ENCODE measurements at regions of chr4 and their contacts with region 1.

Region 1: DNA sequence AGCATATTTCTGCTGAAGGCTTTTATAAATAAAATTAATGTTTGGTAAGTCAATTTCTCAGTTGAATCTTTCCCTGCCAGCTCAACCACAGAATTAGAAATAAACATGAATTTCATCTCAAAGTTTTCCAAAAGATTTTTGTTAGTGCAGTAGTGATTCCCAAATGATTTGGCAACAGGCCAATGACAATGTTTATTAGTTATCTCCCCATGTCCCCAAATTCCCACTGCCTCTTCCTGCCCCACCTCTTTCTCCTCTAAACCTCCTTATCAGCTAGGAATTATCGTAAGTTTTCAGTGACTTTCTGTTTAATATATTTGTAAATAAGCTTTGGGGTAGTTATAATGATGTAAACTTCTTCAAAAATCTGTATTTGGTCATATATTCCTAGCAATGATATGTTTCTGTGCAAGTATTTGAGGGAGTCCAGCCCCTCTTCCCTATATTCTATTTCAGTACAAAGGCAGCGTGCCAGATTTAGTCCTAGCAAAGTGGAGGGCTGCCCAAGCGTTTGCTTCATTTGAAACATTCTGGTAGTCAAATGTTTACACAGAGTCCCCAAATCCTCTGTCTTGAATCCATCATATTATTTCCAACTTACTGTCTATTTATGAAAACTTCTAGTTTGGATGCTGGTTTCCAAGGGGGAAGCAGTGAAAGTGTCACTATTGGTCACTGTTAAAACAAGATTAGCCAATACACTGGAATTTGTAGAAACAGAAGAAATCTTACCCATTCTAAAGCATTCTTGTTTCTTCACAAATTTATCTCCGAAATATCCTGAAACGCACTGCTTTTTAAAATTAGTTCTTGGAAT is 33.7 kb upstream of the ANKRD50 start:
- DNase-seq: peak in 1 of 4 donors; percentile 9
- ATAC-seq: no peak
- H3K4me3 ChIP-seq: no peak overlapping the region
- H3K27ac ChIP-seq: no peak overlapping the region
- H3K4me1 ChIP-seq: no peaks in the 10 kb centered on the region
- H3K27me3 ChIP-seq: no peaks in the 10 kb centered on the region
- CTCF ChIP-seq: no peak
- POLR2A ChIP-seq: no peak

Region 2: DNA sequence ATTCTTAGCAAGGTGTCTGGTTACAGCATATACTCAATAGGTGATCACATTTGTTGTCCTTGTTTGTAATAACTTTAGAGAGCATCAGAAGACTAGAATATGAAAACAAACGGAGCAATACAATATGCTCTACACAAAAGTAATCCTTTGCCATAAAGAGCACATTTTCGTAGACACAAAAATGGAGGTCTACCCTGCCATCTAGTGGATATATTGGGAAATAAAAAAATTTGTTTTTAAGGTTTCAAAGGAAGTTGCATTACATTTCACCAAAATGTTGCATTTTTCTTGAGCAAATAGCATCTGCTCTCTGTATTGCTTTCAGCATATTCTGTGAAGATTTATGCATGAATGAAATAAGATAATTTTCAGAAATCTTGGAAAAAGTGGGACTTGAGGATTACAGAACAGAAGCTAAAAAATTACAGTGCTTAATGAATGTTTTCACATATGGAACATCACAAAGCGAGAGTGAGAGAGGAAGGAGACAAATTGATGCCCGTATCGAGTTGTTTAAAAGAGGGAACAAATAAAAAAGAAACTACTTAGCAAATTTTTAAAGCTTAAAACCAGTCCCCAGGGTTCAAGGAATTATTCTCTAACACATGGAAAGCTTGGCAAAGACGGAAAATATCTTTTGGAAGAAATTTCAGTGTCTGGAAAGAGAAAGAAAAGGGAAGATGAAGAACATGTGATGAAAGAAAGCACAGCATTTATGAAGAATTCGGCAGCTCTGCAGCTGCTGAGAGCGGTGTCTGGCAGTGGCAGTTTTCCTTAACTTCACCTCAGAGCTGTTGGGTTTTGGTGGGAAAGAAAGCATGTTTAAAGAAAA is 423.7 kb before region 1 on chr4:
- intact Hi-C with region 1: loop called (anchors 10 kb)
- DNase-seq: no peak
- ATAC-seq: peak; percentile 58
- H3K4me3 ChIP-seq: no peak overlapping the region
- H3K27ac ChIP-seq: no peak overlapping the region
- H3K4me1 ChIP-seq: no peaks in the 10 kb centered on the region
- H3K27me3 ChIP-seq: no peaks in the 10 kb centered on the region
- CTCF ChIP-seq: peak in 6 of 7 experiments; percentile 24 to 55 (median 50)
- POLR2A ChIP-seq: no peak

Region 3: DNA sequence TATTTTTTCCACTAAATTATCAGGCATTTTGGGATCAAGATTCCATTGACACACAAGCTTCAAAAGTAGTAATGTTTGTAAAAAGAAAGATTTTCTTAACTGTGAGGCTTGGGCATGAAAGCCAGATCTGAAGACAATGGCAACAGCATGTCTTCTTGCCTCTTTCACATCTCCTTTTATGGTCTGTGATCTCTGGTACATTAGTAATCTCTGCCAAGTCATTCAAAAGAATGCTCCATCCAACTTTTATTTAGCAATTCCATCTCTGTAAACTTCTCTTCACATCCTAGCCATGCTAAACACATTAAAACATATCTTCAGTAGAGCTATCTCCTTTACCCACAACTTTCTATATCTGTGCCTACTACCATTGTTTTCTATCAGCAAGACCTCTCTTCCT is 1034.0 kb after region 1 on chr4:
- intact Hi-C with region 1: no loop called
- DNase-seq: no peak
- ATAC-seq: no peak
- H3K4me3 ChIP-seq: no peak overlapping the region
- H3K27ac ChIP-seq: no peak overlapping the region
- H3K4me1 ChIP-seq: no peaks in the 10 kb centered on the region
- H3K27me3 ChIP-seq: no peaks in the 10 kb centered on the region
- CTCF ChIP-seq: no peak
- POLR2A ChIP-seq: no peak

Measured in body of pancreas (tissue), 4 donors.